ENCODE measurements at regions of chr16 and their contacts with region 1.

Region 1: GRCh38 chr16:27313422-27314160 is at the start of gene IL4R:
- DNase-seq: peak; percentile 70
- H3K4me3 ChIP-seq: peak within 1 kb of the TSS; percentile 61 to 87 (median 70)
- H3K27ac ChIP-seq: peak within 1 kb of the TSS; percentile 89
- H3K4me1 ChIP-seq: peaks cover 34% of the 10 kb centered on the region
- H3K27me3 ChIP-seq: no peaks in the 10 kb centered on the region
- CTCF ChIP-seq: no peak
- total RNA-seq, gene IL4R: 69.8 to 152 TPM

Region 2: GRCh38 chr16:27058299-27058698 is 255.3 kb before region 1 on chr16:
- CTCF ChIA-PET with region 1: no interaction called
- dilution Hi-C with region 1: no loop called
- in situ Hi-C with region 1: no loop called
- intact Hi-C with region 1: no loop called
- DNase-seq: no peak
- H3K4me3 ChIP-seq: no peak overlapping the region
- H3K27ac ChIP-seq: no peak overlapping the region
- H3K4me1 ChIP-seq: no peaks in the 10 kb centered on the region
- H3K27me3 ChIP-seq: no peaks in the 10 kb centered on the region
- CTCF ChIP-seq: no peak

Region 3: DNA sequence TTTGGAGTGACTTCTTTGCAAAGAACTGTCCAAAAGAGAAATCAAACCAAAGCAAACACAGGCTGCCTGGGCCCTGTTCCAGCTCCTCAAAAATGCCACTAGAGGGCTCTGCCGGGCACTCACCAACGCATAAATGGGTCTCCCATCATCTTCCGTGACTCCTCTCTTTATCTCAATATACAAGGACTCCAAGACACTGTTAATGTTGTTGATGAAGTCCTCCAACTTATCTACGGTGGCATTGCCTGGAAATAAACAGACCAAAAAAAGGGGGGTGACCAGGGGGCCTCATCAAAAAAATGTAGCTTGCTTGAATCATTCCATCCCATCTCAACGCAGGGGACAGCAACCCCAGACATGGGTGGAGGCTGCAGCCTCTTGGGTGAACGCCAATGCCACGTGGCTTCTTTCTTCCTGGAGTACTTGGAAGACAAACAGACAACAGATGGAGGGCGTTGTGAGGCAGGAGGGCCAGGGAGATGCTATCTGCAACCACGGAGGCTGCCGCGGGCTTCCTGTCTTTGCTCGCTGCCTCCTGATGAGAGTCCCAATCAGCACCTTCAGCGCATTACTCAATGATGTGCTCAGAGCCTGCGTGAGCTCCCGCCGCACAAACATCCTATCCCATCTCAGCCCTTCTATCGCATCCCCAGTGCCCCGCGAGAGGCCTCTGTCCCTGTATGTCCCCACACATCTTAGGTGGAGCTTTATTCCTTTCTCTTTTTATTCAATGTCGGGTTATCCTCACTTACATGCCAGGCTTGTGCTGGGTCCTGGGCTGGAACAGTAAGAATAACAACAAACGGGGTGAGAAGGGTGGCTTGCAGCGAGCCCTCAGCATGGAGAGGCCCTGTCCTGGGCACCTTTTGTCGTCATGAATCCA is 78.3 kb before region 1 on chr16:
- CTCF ChIA-PET with region 1: no interaction called
- dilution Hi-C with region 1: no loop called
- in situ Hi-C with region 1: no loop called
- intact Hi-C with region 1: loop called (anchors 1 kb)
- DNase-seq: peak; percentile 78
- H3K4me3 ChIP-seq: no peak overlapping the region
- H3K27ac ChIP-seq: peak overlapping the region; percentile 26
- H3K4me1 ChIP-seq: peaks cover 25% of the 10 kb centered on the region
- H3K27me3 ChIP-seq: no peaks in the 10 kb centered on the region
- CTCF ChIP-seq: peak; percentile 93 to 96

Region 4: DNA sequence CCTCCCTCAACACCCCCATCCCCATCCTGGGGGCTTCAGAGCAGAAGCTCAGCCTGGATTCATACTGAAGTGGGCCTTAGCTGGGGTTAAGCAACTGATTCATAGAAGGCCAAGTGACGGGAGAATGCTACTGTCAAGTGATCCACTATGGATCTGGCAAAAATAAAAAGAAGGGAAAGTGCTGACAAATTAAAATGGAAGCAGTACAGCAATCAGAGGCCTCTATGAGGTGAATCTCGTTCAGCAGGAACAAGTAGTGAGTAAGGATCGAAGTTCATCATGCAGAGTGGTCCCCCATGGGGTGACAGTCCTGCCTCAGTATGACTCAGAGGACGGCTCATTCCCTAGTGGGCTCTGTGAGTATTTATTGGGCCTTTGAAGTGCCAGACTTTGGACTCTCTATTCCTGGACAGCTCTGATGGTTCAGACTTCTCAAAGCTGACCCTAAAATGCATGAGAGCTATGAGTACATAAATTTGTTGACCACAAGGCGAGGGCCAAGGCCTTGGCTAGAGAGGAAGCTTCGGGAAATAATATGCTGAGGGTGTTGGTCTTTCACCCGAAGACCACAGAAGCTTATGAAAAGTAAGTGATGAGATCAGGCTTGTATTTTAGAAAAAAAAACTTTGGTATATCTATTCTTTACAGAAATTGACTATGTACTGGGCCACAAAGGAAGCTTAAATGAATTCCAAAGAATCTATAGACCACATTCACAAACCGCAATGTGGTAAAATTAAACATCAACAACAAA is 39.7 kb before region 1 on chr16:
- CTCF ChIA-PET with region 1: no interaction called
- dilution Hi-C with region 1: loop called (anchors 5 kb)
- in situ Hi-C with region 1: loop called in 1 of 2 experiments (anchors 5 kb)
- intact Hi-C with region 1: no loop called
- DNase-seq: no peak
- H3K4me3 ChIP-seq: no peak overlapping the region
- H3K27ac ChIP-seq: no peak overlapping the region
- H3K4me1 ChIP-seq: no peaks in the 10 kb centered on the region
- H3K27me3 ChIP-seq: no peaks in the 10 kb centered on the region
- CTCF ChIP-seq: no peak

Region 5: DNA sequence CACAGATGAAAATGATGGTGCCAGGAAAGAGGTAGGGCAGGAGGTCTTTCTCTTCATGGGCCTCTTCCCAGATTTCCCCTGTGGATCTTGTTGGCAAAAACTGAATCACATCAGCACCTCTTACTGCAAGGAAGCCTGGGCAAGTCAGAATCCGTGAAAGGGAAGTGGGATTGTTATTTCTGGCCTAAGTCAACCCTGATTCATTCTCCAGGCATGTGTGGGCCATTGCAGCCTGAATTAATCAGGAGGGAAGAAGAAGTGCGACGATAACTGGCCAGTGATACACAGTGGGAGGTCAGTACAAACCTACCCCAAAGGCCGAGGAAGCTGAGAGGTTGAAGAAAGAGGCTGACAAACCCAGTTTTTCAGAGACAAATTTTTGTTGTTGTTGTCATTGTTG is 27.1 kb before region 1 on chr16:
- CTCF ChIA-PET with region 1: no interaction called
- dilution Hi-C with region 1: no loop called
- in situ Hi-C with region 1: no loop called
- intact Hi-C with region 1: no loop called
- DNase-seq: peak; percentile 95
- H3K4me3 ChIP-seq: no peak overlapping the region
- H3K27ac ChIP-seq: peak overlapping the region; percentile 33
- H3K4me1 ChIP-seq: peaks cover 16% of the 10 kb centered on the region
- H3K27me3 ChIP-seq: no peaks in the 10 kb centered on the region
- CTCF ChIP-seq: no peak

Region 6: GRCh38 chr16:27367461-27368357 is 54.1 kb after region 1 on chr16:
- CTCF ChIA-PET with region 1: interaction called, 3 read pairs
- dilution Hi-C with region 1: no loop called
- in situ Hi-C with region 1: loop called in 1 of 2 experiments (anchors 5 kb)
- intact Hi-C with region 1: loop called (anchors 1 kb)
- DNase-seq: peak; percentile 68
- H3K4me3 ChIP-seq: peak overlapping the region in 1 of 3 experiments; percentile 19
- H3K27ac ChIP-seq: peak overlapping the region; percentile 43
- H3K4me1 ChIP-seq: peaks cover 46% of the 10 kb centered on the region
- H3K27me3 ChIP-seq: no peaks in the 10 kb centered on the region
- CTCF ChIP-seq: peak; percentile 56 to 84

Region 7: DNA sequence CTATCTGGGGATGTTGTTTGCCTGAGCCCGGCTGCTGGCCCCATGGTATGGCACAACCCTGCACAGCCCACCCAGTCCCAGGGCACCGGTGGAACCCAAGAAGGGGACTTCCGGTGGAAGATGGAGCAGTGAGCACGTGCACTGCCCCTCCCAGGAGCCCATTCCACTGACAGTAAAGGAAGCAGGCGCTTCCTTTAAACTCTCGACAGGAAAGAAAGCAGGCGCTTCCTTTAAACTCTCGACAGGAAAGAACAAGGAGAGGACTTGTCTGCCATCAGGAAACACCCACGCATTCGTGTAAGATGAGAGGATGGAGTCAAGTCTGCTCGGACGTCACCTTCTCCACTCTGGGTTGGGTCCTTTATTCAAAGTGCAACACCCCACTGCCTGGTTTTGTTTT is 142.1 kb after region 1 on chr16:
- CTCF ChIA-PET with region 1: no interaction called
- dilution Hi-C with region 1: no loop called
- in situ Hi-C with region 1: no loop called
- intact Hi-C with region 1: loop called (anchors 5 kb)
- DNase-seq: peak; percentile 40
- H3K4me3 ChIP-seq: no peak overlapping the region
- H3K27ac ChIP-seq: no peak overlapping the region
- H3K4me1 ChIP-seq: peaks cover 17% of the 10 kb centered on the region
- H3K27me3 ChIP-seq: no peaks in the 10 kb centered on the region
- CTCF ChIP-seq: no peak